ENCODE measurements at regions of chr1 and their contacts with region 1.

Region 1: DNA sequence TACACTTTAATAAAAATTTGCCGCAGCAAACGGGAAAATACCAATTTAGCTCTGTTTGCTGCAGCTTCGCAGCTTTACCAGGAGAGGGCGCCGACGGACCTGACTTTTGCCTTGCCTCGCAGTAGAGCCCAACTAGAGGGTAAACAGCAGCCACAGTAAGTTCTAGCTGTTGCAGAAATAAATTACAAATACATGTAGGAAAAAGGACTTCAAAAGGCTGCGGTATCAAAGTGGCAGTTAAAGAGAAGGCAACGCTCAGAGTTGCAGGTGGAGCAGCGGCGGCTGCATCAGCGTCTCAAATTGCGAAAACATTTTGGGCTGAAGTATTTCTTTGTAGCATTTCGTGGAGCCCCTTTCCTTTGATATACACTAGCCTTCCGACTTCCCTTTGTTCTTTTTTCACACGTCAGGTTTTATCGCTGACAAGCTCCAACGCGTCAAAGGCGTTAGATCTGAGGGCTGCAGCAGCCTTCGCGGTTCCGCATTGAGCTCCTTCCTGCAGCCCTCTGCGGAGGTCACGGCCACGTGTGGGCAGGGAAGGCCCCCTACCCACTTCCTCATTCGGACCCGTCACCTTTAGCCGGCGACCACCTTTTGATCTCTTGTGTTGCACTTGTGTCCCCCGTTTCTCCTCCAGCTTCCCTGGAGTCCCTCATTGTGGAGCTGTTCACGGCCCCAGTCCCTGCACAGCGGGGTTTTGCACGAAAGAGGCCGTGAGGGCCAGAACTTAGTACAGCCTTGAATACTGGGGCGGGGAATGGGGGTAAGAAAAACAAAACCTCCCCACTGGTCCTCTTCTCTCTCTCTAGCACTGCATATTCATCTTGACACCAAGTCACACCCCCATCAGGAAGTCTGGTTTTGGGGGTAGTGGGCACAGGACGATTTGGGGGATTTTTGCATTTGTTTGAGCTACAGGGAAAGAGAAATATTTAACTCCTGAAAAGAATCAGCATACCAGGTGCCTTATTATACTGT is 72.8 kb downstream of the S1PR1 start:
- DNase-seq: peak; percentile 64
- ATAC-seq: peak; percentile 81

Region 2: DNA sequence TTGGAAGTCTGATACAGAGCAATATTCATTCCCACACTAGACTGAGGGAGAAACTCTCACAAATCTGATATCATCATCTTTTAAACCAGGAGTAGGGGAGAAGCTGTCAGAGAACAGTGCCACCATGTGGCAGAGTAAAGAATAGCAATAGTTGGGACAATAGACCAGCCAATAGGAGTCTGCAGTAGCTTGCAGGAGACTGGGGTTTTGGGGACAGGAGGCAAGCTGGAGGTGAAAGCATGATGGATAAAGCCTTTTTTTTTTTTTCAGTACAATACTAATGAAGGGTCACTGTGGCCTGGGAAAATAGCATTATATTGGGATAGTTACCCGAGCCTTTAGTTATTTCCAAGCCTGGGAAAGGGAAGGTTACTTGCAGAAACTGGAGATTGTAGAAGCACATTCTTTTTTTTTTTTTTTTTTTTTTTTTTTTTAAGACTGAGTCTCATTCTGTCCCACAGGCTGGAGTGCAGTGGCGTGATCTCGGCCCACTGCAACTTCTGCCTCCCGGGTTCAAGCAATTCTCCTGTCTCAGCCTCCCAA is 47.9 kb after region 1 on chr1:
- intact Hi-C with region 1: loop called (anchors 5 kb)
- DNase-seq: no peak
- ATAC-seq: peak; percentile 91

Region 3: GRCh38 chr1:101438359-101438758 is 128.7 kb after region 1 on chr1:
- intact Hi-C with region 1: loop called (anchors 10 kb)
- DNase-seq: no peak
- ATAC-seq: peak; percentile 56

Region 4: DNA sequence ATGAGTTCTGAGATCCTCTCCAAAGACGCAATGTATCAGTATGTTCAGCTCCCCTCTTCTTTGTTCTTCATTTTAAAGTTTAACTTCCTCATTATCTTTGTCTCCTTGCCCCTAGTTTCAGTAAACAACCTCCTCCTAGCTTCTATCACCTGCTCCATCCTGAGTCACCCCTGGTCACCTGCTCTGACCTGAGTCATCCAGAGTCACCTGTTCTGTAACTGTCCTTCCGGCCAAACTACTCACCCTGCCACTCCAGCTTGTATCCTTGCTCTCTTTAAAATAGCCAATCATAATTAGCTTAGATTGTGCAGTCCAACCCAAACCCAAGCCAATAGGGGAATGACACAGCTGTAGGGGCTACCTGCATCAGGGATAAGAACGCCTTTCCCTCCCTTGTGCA is 355.1 kb after region 1 on chr1:
- intact Hi-C with region 1: no loop called
- DNase-seq: no peak
- ATAC-seq: no peak

Measured in Right ventricle myocardium superior (tissue), 1 donor.